Naive thymus-derived CD4-positive, alpha-beta T cell (primary cell): ENCODE measurements at regions of chr19 and their contacts with region 1.

Region 1: DNA sequence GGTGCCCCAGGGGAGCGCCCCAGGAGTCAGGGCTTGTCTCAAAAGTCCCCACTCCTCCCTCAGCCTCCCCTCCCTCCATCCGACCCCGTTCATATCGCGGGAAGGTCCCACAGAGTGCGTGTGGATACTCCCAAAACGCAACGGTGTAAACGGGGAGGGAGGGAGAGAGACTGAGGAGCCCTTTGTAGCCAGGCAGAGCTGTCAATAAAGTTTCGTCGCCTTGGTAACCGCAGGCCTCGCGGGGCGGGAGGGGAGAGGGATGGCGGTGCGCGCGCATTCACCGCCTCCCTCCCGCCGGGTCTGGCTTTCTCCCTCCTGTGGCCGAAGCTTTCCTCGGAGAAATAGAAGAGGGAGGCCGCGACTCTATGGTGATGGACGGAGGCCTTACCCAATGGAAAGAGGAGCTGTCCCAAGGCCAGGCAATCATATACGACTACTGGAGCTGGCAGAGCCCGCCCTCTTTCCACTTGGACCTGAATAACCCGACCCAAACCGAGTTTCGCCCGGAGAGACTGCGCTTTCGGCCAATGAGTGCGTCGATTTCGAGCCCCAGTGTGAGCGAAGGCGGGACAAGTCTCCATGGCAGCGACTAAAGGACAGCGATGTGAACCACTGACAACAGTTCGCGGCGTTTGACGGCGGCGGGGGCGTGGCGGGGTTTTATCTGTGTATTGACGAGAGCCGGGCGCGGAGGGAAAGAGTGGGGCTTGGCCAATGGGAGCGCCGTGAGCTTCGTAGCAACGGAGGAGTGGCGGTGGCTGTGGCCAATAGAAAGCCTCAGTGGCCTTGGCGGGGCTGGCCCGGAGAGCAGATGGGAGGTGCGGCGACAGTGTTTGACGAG is at the start of gene KMT5C:
- DNase-seq: peak; percentile 99 to 100 (median 100)
- ATAC-seq: peak; percentile 83
- H3K4me3 ChIP-seq: peak within 1 kb of the TSS; percentile 80
- H3K4me3 Mint-ChIP-seq: peak within 1 kb of the TSS; percentile 87 to 99 (median 96)
- H3K27ac ChIP-seq: peak within 1 kb of the TSS; percentile 93
- H3K27ac Mint-ChIP-seq: peak within 1 kb of the TSS; percentile 88 to 100 (median 97)
- H3K4me1 ChIP-seq: peaks cover 8 to 15% of the 10 kb centered on the region in 2 donors
- H3K4me1 Mint-ChIP-seq: peaks cover 5 to 28% (median 24%) of the 10 kb centered on the region in 7 donors
- H3K27me3 ChIP-seq: no peaks in the 10 kb centered on the region
- H3K27me3 Mint-ChIP-seq: peaks cover 0 to 16% (median 0%) of the 10 kb centered on the region in 5 donors
- total RNA-seq, gene KMT5C: 21.8 to 63.3 (median 27.2) TPM

Region 2: DNA sequence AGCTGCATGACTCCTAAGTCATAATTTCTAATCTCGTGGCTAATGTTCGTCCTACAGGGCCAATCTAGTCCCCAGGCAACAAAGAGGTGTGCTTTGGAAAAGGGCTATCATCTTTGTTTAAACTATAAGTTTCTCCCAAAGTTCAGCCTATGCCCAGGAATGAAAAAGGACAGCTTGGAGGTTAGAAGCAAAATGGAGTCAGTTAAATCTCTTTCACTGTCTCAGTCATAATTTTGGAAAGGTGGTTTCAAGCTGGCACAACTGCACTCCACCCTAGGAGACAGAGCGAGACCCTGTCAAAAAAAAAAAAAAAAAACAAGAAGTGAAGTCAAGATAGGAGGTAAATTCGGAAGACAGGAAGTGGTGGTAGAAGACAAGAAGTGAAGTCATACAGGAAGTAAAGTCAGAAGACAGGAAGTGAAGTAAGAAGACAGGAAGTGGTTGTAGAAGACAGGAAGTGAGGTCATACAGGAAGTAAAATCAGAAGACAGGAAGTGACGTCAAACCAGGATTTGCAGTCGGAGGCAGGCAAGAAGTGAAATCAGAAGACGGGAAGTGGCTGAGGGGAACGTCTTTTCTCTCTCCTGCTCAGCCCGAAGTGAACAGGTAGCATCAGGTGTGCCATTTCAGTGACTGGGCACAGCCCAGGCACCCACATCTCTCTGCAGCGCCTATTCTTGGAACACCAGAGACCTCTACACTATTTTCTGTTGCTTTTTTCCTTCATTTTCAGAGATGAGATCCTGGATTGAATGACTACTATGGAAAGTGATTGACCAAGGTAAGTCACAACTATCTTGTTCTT is 333.4 kb before region 1 on chr19:
- CTCF ChIA-PET with region 1: no interaction called
- POLR2A ChIA-PET with region 1: no interaction called
- intact Hi-C with region 1: loop called in 1 of 2 experiments (anchors 5 kb)
- DNase-seq: peak; percentile 26 to 92 (median 88)
- ATAC-seq: peak; percentile 92
- H3K4me3 ChIP-seq: peak overlapping the region; percentile 51
- H3K4me3 Mint-ChIP-seq: peak overlapping the region; percentile 75 to 92 (median 84)
- H3K27ac ChIP-seq: peak overlapping the region; percentile 75
- H3K27ac Mint-ChIP-seq: peak overlapping the region; percentile 86 to 98 (median 92)
- H3K4me1 ChIP-seq: peaks cover 0 to 8% of the 10 kb centered on the region in 2 donors
- H3K4me1 Mint-ChIP-seq: peaks cover 26 to 47% (median 40%) of the 10 kb centered on the region in 7 donors
- H3K27me3 ChIP-seq: peaks cover 0 to 3% of the 10 kb centered on the region in 2 donors
- H3K27me3 Mint-ChIP-seq: peaks cover 3 to 41% (median 35%) of the 10 kb centered on the region in 5 donors

Region 3: GRCh38 chr19:55301459-55302317 is 37.6 kb before region 1 on chr19:
- CTCF ChIA-PET with region 1: interaction called, 12 read pairs
- POLR2A ChIA-PET with region 1: interaction called, 4 read pairs
- intact Hi-C with region 1: loop called (anchors 1 kb)
- DNase-seq: peak; percentile 84 to 97 (median 91)
- ATAC-seq: peak; percentile 97
- H3K4me3 ChIP-seq: peak overlapping the region; percentile 61
- H3K4me3 Mint-ChIP-seq: peak overlapping the region; percentile 77 to 97 (median 88)
- H3K27ac ChIP-seq: peak overlapping the region; percentile 66
- H3K27ac Mint-ChIP-seq: peak overlapping the region; percentile 66 to 95 (median 84)
- H3K4me1 ChIP-seq: peaks cover 5 to 10% of the 10 kb centered on the region in 2 donors
- H3K4me1 Mint-ChIP-seq: peaks cover 0 to 17% (median 11%) of the 10 kb centered on the region in 7 donors
- H3K27me3 ChIP-seq: no peaks in the 10 kb centered on the region
- H3K27me3 Mint-ChIP-seq: peaks cover 0 to 3% (median 0%) of the 10 kb centered on the region in 5 donors

Region 4: DNA sequence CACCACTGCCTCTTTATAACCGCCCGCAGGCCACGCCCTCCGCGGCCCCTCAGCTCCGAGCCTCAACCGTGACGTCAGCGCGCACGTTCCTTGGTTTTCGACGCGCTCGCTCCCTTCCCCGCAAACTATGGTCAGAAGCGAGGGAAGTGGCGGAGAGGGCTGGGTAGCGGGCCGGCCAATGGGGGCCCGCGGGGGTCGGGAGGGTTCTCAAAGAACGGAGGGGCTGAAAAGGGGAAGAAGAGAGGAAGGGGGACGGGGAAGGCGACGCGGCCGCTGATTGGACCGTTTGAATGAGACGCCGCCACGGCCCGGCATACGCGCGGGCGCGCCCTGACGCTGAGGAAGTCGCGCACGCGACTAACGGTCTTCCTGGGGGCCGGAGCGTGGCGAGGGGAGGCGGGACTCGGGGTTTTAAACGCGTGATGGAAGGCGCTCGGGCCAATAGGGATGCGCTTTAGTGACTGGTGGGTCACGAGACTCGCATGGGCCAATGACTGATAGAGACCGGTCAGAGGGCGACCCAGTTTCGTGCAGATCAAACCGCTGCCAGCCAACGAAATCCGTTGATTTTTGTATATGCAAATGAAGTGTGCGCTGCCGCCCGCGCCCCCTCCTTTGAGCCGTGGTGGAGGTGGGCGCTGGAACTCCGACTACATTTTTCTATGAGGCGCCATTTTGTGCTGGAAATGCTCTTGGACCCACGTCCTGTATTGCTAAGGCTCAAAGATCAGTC is 68.7 kb after region 1 on chr19:
- CTCF ChIA-PET with region 1: no interaction called
- POLR2A ChIA-PET with region 1: interaction called, 8 read pairs
- intact Hi-C with region 1: loop called (anchors 1 kb)
- DNase-seq: peak; percentile 94 to 99 (median 97)
- ATAC-seq: peak; percentile 93
- H3K4me3 ChIP-seq: peak overlapping the region; percentile 89
- H3K4me3 Mint-ChIP-seq: peak overlapping the region; percentile 86 to 97 (median 92)
- H3K27ac ChIP-seq: peak overlapping the region; percentile 96
- H3K27ac Mint-ChIP-seq: peak overlapping the region; percentile 93 to 100 (median 99)
- H3K4me1 ChIP-seq: peaks cover 17 to 24% of the 10 kb centered on the region in 2 donors
- H3K4me1 Mint-ChIP-seq: peaks cover 21 to 36% (median 26%) of the 10 kb centered on the region in 7 donors
- H3K27me3 ChIP-seq: no peaks in the 10 kb centered on the region
- H3K27me3 Mint-ChIP-seq: peaks cover 0 to 12% (median 0%) of the 10 kb centered on the region in 5 donors

Region 5: DNA sequence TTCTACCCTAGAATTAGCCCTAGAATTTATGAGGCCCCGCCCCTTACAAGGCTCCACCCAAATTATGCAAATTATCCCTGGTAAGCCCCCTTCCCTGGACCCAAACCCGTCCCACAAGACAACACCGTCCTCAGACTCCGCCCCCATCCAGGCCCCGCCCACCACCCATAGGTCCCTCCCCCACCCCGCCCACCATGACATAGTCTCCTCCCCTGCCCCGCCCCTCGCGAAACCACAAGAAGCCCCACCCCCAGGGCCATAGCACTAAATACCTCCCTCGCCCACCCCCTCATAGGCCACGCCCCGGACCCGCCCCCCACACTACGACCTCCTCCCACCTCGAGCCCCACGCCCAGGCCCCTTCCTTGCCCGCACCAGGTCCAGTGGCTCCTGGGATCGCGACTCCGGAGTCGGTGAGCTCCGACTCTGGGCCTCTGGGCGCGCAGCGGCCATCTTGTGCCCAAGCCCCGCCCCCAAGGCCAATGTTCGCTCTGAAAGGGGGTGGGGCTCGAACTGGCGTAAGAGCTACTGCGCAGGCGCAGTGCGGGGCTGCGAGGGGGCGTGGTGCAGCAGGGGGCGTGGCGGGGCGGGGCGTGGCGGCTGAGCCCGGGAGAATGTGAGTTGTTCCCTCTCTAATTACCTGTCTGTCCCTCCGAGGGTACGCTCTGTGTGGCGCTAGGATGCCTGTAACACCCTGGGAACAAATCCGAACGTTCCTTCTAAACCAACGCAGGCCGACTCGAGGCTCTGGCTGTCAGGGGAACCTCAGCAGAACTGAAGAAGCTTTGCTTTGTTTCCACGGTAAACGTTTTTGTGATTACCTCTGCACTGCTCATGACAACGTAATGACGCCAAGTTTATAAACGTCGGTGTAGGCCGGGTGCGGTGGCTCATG is 285.1 kb after region 1 on chr19 and contains the start of gene ZNF784:
- CTCF ChIA-PET with region 1: no interaction called
- POLR2A ChIA-PET with region 1: interaction called, 4 read pairs
- intact Hi-C with region 1: loop called in 1 of 2 experiments (anchors 1 kb)
- DNase-seq: peak; percentile 89 to 99 (median 95)
- ATAC-seq: peak; percentile 90
- H3K4me3 ChIP-seq: peak within 1 kb of the TSS; percentile 76
- H3K4me3 Mint-ChIP-seq: peak within 1 kb of the TSS; percentile 78 to 96 (median 90)
- H3K27ac ChIP-seq: peak within 1 kb of the TSS; percentile 100
- H3K27ac Mint-ChIP-seq: peak within 1 kb of the TSS; percentile 89 to 99 (median 98)
- H3K4me1 ChIP-seq: peaks cover 27 to 46% of the 10 kb centered on the region in 2 donors
- H3K4me1 Mint-ChIP-seq: peaks cover 26 to 65% (median 58%) of the 10 kb centered on the region in 7 donors
- H3K27me3 ChIP-seq: no peaks in the 10 kb centered on the region
- H3K27me3 Mint-ChIP-seq: peaks cover 0 to 18% (median 0%) of the 10 kb centered on the region in 5 donors
- total RNA-seq, gene ZNF784: 5.1 to 17.1 (median 9.0) TPM